ENCODE measurements at regions of chr13 and their contacts with region 1.

Region 1: GRCh38 chr13:108895220-108895704 is 265.9 kb downstream of the MYO16 start:
- DNase-seq: no peak
- H3K4me3 ChIP-seq: no peak overlapping the region
- H3K27ac ChIP-seq: no peak overlapping the region
- H3K4me1 ChIP-seq: no peaks in the 10 kb centered on the region
- H3K27me3 ChIP-seq: peaks cover 0 to 3% (median 0%) of the 10 kb centered on the region in 4 donors
- CTCF ChIP-seq: peak in 5 of 6 experiments; percentile 23 to 59 (median 49)
- POLR2A ChIP-seq: no peak

Region 2: GRCh38 chr13:108342369-108343289 is 552.6 kb before region 1 on chr13:
- intact Hi-C with region 1: loop called (anchors 10 kb)
- DNase-seq: no peak
- H3K4me3 ChIP-seq: no peak overlapping the region
- H3K27ac ChIP-seq: no peak overlapping the region
- H3K4me1 ChIP-seq: no peaks in the 10 kb centered on the region
- H3K27me3 ChIP-seq: no peaks in the 10 kb centered on the region
- CTCF ChIP-seq: peak in 2 of 6 experiments; percentile 23 to 34
- POLR2A ChIP-seq: no peak